Caco-2 (cell line): ENCODE measurements at regions of chr9 and their contacts with region 1.

Region 1: DNA sequence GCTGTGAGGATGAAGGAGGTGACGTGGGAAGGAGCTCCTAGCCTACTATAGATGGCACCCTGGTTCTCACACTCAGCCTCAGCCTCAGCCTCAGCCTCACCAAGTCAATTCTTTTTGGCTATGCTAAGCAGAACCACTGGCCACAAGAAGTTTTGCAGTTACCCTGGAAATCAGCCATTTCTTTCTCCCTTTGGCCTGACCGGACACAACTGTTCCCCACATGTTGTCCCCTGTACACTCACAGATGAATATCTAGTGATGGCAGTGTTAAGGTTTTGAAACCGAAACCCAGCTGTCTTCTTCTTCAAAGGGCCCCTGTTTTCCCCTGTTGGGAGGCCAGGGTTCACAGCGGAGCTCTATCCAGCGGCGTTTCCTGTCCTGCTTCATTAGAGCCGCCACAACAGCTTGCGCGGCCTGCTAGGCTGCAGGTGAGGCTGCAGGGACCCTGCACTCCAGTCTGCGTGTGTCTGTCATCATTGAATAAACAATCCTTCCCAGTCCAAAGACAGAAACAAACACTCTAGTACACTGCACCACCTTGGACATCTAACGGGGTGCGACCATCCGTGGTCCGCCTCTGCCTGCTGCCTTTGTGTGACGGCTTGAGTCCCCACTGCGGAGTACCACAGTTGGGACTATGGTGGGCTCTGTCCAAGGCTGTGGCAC is 250.5 kb downstream of the DENND1A start:
- DNase-seq: peak in 1 of 2 experiments; percentile 11
- H3K4me3 ChIP-seq: no peak overlapping the region
- H3K4me3 Mint-ChIP-seq: no peak overlapping the region
- H3K27ac Mint-ChIP-seq: no peak overlapping the region
- H3K4me1 ChIP-seq: peaks cover 18% of the 10 kb centered on the region
- H3K4me1 Mint-ChIP-seq: peaks cover 16% of the 10 kb centered on the region
- H3K27me3 ChIP-seq: no peaks in the 10 kb centered on the region
- H3K27me3 Mint-ChIP-seq: peaks cover 12% of the 10 kb centered on the region
- CTCF ChIP-seq: no peak

Region 2: DNA sequence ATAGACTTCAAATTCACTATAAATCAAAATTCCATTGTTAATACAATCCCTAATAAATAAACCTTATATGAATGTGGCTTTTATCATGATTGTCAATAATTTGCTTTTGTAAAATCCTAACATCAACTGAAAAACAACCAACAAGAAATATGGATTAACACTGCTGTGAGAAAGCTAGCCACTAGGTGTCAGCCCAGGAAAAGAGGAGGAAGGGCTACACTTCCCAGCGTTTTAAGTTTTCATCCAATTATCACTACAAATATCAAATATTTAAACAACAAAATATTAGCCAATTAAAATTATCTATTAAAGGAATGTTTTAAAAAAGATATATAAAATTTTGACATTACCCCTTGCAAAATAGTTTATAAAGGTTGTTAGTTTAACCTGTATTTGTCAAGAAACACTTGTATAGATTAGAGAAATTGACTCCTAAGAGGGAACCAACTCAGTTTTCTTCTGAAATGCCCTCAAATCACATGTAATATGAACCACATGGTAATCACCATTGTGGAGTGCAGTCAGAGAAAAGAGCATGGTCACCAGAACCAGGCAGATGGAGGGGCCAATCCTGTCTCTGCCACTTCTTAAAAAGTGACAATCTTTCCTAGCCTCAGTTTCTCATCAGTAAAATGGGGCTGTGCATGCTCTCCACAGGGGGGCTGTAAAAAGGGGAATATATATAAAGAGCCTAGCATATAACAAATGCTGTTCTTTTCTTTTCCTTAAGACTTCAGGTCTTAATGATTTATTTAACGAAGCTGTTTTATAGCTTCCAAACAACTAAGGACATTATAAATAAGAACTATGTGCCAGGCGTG is 135.2 kb before region 1 on chr9:
- CTCF ChIA-PET with region 1: no interaction called
- POLR2A ChIA-PET with region 1: no interaction called
- intact Hi-C with region 1: loop called (anchors 10 kb)
- DNase-seq: peak in 1 of 2 experiments; percentile 37
- H3K4me3 ChIP-seq: no peak overlapping the region
- H3K4me3 Mint-ChIP-seq: no peak overlapping the region
- H3K27ac Mint-ChIP-seq: no peak overlapping the region
- H3K4me1 ChIP-seq: peaks cover 9% of the 10 kb centered on the region; the same call in 1 of the 2 replicates
- H3K4me1 Mint-ChIP-seq: peaks cover 7% of the 10 kb centered on the region
- H3K27me3 ChIP-seq: no peaks in the 10 kb centered on the region
- H3K27me3 Mint-ChIP-seq: no peaks in the 10 kb centered on the region
- CTCF ChIP-seq: peak; percentile 75 to 79

Region 3: GRCh38 chr9:123645126-123645525 is 34.3 kb before region 1 on chr9:
- CTCF ChIA-PET with region 1: no interaction called
- POLR2A ChIA-PET with region 1: no interaction called
- intact Hi-C with region 1: loop called (anchors 1 kb)
- DNase-seq: peak; percentile 41 to 60
- H3K4me3 ChIP-seq: no peak overlapping the region
- H3K4me3 Mint-ChIP-seq: no peak overlapping the region
- H3K27ac Mint-ChIP-seq: no peak overlapping the region
- H3K4me1 ChIP-seq: peaks cover 20% of the 10 kb centered on the region
- H3K4me1 Mint-ChIP-seq: peaks cover 31% of the 10 kb centered on the region
- H3K27me3 ChIP-seq: no peaks in the 10 kb centered on the region
- H3K27me3 Mint-ChIP-seq: no peaks in the 10 kb centered on the region
- CTCF ChIP-seq: no peak

Region 4: DNA sequence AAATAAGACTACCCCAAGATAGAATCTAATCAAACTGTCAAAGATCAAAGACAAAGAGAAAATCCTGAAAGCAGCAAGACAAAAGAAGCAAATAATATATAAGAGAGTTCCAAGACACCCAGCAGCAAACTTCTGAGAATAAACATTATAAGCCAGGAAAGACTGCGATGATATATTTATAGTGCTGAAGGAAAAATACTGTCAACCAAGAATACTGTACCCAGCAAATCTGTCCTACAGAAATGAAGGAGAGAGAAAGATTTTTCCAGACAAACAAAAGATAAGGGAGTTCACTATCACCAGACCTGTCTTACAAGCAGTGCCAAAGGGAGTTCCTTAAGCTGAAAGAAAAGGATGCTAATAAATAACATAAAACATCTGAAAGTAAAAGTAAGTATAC is 23.0 kb after region 1 on chr9:
- CTCF ChIA-PET with region 1: no interaction called
- POLR2A ChIA-PET with region 1: no interaction called
- intact Hi-C with region 1: loop called (anchors 1 kb)
- DNase-seq: no peak
- H3K4me3 ChIP-seq: no peak overlapping the region
- H3K4me3 Mint-ChIP-seq: no peak overlapping the region
- H3K27ac Mint-ChIP-seq: no peak overlapping the region
- H3K4me1 ChIP-seq: peaks cover 9% of the 10 kb centered on the region
- H3K4me1 Mint-ChIP-seq: peaks cover 17% of the 10 kb centered on the region
- H3K27me3 ChIP-seq: no peaks in the 10 kb centered on the region
- H3K27me3 Mint-ChIP-seq: no peaks in the 10 kb centered on the region
- CTCF ChIP-seq: no peak

Region 5: GRCh38 chr9:123922911-123923310 is 243.5 kb after region 1 on chr9:
- CTCF ChIA-PET with region 1: no interaction called
- POLR2A ChIA-PET with region 1: no interaction called
- intact Hi-C with region 1: loop called (anchors 1 kb)
- DNase-seq: no peak
- H3K4me3 ChIP-seq: no peak overlapping the region
- H3K4me3 Mint-ChIP-seq: peak overlapping the region; percentile 42
- H3K27ac Mint-ChIP-seq: peak overlapping the region; percentile 63
- H3K4me1 ChIP-seq: peaks cover 60% of the 10 kb centered on the region
- H3K4me1 Mint-ChIP-seq: peaks cover 50% of the 10 kb centered on the region
- H3K27me3 ChIP-seq: no peaks in the 10 kb centered on the region
- H3K27me3 Mint-ChIP-seq: no peaks in the 10 kb centered on the region
- CTCF ChIP-seq: no peak

Region 6: DNA sequence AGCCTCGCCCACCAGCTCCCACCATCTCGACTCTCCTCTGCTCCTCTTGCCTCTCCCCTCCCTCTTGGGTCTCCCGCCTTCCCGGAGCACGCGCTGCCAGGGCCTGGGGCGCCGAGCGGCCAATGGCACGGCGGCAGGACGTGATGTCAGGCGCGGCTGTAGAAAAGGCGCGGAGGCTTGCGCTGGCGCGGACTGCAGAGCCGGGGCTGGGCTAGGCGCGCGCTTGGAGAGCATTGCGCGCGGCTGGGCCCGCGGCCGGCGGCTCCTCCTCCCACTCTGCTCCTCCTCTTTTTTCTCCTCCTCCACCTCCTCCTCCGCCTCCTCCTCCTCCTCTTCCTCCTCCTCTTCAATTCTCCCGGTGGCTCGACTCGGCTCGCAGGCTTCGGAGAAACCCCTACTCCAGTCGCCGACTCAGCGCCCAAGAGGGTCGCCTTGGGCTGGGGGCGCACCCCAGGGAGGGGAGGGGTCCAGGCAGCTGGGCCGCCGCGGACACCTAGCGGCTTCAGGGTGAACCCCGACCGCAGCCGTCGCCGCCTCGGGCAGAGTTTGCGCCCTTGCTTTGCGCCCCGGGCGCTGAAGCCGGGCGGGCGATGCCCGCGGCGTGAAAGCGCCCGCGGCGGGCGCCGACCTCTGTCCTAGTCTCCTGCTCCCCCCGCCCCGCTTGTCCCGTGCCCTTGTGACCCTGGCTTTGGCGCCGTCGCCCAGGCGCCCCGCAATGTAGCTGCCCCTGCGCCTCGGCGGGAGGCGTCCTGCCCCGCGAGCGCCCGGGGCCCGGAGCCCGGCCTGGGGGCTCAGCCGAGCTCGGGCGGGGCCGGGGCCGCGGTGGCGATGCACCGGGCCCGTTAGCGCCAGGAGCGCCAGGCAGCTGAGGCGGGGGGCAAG is 332.2 kb after region 1 on chr9 and contains the start of gene LHX2:
- CTCF ChIA-PET with region 1: no interaction called
- POLR2A ChIA-PET with region 1: no interaction called
- intact Hi-C with region 1: loop called (anchors 5 kb)
- DNase-seq: peak; percentile 88 to 89
- H3K4me3 ChIP-seq: peak within 1 kb of the TSS; percentile 56
- H3K4me3 Mint-ChIP-seq: peak within 1 kb of the TSS; percentile 87
- H3K27ac Mint-ChIP-seq: no peak within 1 kb of the TSS
- H3K4me1 ChIP-seq: peaks cover 36% of the 10 kb centered on the region
- H3K4me1 Mint-ChIP-seq: peaks cover 16% of the 10 kb centered on the region
- H3K27me3 ChIP-seq: peaks cover 11% of the 10 kb centered on the region
- H3K27me3 Mint-ChIP-seq: peaks cover 16% of the 10 kb centered on the region
- CTCF ChIP-seq: no peak
- total RNA-seq, gene LHX2: 2.6 and 4.0 TPM in 2 replicates

Region 7: GRCh38 chr9:124133727-124134126 is 454.3 kb after region 1 on chr9:
- CTCF ChIA-PET with region 1: no interaction called
- POLR2A ChIA-PET with region 1: no interaction called
- intact Hi-C with region 1: no loop called
- DNase-seq: peak; percentile 44 to 61
- H3K4me3 ChIP-seq: no peak overlapping the region
- H3K4me3 Mint-ChIP-seq: no peak overlapping the region
- H3K27ac Mint-ChIP-seq: no peak overlapping the region
- H3K4me1 ChIP-seq: peaks cover 23% of the 10 kb centered on the region
- H3K4me1 Mint-ChIP-seq: peaks cover 17% of the 10 kb centered on the region
- H3K27me3 ChIP-seq: no peaks in the 10 kb centered on the region
- H3K27me3 Mint-ChIP-seq: no peaks in the 10 kb centered on the region
- CTCF ChIP-seq: peak in 1 of 2 experiments; percentile 22